ENCODE measurements at regions of chr1 and their contacts with region 1.

Region 1: DNA sequence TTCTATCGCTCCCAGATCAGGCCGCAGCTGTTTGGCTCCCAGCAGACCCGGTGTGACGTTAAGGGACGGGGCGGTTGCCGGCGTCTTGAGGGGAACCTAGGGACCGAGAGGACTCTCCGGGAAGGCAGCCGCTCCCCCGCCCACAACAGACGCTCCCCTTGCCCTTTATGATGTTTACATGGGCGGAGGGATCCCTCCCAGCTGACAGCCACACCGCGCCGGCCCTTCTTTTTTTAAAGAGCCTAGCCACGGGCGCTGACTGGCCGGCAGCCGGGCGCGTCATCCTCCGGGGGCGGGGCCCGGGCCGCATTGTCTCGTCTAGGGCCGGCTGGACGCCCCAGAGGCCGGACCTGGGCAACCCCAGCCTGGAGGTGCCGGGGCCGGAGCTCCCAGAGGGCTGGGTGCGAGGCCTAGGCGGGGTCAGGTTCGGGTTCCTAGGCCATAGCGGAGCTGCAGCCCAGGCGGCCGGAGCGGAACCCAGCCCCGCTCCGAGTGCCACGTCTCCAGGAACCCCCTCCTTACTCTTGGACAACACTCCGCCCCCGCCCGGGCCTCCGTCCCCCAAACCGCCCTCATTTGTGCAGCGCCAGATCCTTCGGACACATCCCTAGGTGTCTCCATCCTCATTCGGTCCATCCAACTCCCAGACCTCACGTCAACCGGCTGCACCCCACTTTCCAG is at the start of gene PCAT6:
- DNase-seq: peak; percentile 99
- total RNA-seq, gene PCAT6: 1.7 TPM

Region 2: GRCh38 chr1:202329891-202330290 is 480.9 kb before region 1 on chr1:
- intact Hi-C with region 1: no loop called
- DNase-seq: no peak

Region 3: GRCh38 chr1:202861420-202862200 is 50.9 kb after region 1 on chr1:
- intact Hi-C with region 1: loop called (anchors 2 kb)
- DNase-seq: peak; percentile 98

Region 4: DNA sequence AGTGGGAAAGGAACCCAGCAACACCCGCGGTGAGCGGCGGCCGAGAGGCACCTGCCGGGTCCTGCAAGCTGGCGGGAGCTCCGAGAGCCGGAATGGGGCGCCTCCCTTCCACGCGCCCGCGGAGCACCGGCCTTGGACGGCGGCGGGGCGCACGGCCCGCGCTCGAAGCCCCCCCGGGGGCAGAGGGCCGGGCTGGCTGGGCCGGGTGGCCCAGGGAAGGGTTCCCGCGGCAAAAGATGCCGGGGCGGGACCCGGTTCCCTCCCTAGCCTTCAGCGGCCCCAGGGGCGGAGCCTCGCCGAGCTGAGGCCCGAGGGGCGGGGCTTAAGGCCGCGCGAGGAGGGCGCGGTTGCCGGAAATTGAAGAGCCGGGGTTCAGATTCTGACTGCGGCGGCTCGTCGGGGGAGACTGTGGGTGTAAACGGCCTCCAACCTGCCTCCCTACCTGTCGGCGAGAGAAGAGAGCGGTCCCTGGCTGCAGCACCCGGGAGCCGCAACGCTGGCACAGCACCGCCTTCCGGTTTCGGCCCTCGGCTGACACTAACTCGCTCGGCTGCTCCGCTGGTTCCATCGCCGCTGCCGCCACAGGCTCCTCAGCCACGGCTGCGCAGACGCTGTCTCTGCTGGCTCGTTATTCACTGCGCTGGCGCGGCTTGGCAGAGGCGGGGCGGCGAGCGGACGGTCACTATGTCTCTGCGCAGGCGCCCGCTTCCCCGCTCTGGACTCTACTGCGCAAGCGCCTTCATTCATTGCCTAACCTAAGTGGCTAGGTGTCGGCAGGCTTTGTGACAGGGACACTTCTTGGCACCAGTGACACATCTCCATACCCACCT is 78.0 kb after region 1 on chr1 and contains the start of gene RABIF:
- intact Hi-C with region 1: loop called (anchors 2 kb)
- DNase-seq: peak; percentile 98
- total RNA-seq, gene RABIF: 5.8 TPM

Region 5: DNA sequence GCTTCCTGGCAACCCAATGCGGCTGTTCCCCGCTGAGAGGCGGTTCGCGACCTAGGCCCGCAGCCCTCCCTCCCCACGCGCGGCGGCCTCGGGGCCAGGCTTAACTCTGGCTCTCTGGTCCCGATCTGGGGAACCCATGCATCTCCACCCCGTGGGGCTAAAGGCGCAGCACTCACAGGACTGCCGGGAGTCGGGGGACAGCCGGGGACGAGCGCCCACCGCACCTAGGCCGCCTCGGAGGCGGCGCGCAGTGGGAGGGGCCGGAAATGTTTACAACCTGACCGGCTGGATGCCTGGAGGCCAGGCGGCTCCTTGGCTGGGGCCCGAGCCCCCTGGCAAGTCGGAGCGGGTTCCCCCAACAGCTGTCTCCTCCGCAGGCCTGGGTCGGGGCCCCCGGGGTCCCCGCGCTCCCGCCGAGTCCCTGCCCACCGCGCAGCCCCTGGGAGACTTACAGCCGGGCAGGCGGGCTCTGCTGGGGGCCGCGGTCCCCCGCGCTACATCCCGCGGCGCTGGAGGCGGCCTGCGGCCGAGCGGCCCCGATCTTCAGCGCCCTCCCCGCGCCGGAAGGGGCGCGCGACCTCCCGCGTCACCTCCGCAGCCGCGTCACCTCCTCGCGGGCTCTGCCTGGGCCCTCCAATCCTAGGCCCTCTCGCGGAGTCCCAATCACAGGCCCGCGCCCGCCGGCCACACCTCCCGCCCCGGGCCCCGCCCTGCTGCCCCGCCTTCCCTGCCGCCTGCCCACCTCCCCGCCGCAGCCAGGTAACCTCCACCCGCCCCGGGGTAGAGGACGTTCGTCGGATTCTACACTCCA is 147.2 kb after region 1 on chr1 and contains the start of gene ADIPOR1:
- intact Hi-C with region 1: loop called (anchors 5 kb)
- DNase-seq: peak; percentile 98
- total RNA-seq, gene ADIPOR1: 89.5 TPM